BJ (cell line): ENCODE measurements at regions of chr1 and their contacts with region 1.

Region 1: GRCh38 chr1:85581802-85582686 is 1.5 kb downstream of the CCN1 start:
- DNase-seq: no peak
- H3K4me3 ChIP-seq: peak overlapping the region; percentile 86
- H3K27me3 ChIP-seq: no peaks in the 10 kb centered on the region
- CTCF ChIP-seq: peak; percentile 48

Region 2: DNA sequence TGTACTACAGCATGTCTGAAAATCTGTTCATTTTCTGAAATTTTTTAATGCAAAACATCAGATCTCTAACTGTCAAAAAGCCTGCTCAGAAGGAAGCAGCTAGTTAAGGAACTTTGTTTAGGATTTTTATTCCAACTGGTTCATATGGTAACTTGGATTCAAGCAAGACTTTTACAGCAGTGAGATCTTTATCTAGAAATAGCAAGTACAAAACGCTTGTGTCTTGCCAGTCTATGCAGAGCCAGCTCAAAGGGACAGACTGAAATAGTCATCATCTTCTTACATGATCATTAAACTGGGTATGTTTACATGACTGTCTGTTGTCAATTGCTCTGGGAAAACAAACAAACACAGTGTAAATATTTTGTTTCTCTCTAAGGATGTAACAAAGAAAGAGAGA is 154.7 kb before region 1 on chr1:
- CTCF ChIA-PET with region 1: no interaction called
- POLR2A ChIA-PET with region 1: interaction called, 13 read pairs
- DNase-seq: peak; percentile 20
- H3K4me3 ChIP-seq: no peak overlapping the region
- H3K27me3 ChIP-seq: no peaks in the 10 kb centered on the region
- CTCF ChIP-seq: no peak

Region 3: GRCh38 chr1:85607126-85607912 is 25.3 kb after region 1 on chr1:
- CTCF ChIA-PET with region 1: interaction called, 34 read pairs
- POLR2A ChIA-PET with region 1: interaction called, 51 read pairs
- DNase-seq: peak; percentile 99
- H3K4me3 ChIP-seq: no peak overlapping the region
- H3K27me3 ChIP-seq: no peaks in the 10 kb centered on the region
- CTCF ChIP-seq: no peak

Region 4: DNA sequence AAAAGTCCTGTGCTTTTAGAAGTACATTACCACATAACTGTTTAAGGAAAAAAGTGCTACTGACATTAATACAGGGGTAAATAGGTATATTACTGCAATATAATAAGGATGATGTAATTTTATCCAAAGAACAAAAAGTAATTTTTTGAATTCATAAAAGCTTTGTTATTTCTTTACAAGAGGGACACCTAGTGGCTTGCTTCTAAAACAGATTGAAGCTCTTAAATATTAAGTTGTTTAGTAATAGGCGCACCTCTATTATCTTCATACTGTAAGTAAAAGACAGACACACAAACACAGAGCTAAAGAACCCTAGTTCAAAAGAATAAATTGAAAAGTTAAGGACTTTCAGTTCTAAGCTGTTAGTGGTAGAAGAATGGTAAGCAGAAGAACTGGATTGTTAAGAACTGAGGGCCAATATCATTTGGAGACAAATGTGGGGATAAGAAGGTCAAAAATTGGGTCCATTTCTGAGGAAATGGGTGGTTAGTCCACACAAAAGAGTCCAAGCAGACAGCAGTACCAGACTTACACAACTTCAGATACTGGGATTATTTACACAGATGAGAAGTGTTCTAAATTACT is 110.8 kb after region 1 on chr1:
- CTCF ChIA-PET with region 1: interaction called, 27 read pairs
- POLR2A ChIA-PET with region 1: interaction called, 26 read pairs
- DNase-seq: peak; percentile 28
- H3K4me3 ChIP-seq: no peak overlapping the region
- H3K27me3 ChIP-seq: no peaks in the 10 kb centered on the region
- CTCF ChIP-seq: peak; percentile 43